CD14-positive monocyte (primary cell): ENCODE measurements at regions of chr11 and their contacts with region 1.

Region 1: DNA sequence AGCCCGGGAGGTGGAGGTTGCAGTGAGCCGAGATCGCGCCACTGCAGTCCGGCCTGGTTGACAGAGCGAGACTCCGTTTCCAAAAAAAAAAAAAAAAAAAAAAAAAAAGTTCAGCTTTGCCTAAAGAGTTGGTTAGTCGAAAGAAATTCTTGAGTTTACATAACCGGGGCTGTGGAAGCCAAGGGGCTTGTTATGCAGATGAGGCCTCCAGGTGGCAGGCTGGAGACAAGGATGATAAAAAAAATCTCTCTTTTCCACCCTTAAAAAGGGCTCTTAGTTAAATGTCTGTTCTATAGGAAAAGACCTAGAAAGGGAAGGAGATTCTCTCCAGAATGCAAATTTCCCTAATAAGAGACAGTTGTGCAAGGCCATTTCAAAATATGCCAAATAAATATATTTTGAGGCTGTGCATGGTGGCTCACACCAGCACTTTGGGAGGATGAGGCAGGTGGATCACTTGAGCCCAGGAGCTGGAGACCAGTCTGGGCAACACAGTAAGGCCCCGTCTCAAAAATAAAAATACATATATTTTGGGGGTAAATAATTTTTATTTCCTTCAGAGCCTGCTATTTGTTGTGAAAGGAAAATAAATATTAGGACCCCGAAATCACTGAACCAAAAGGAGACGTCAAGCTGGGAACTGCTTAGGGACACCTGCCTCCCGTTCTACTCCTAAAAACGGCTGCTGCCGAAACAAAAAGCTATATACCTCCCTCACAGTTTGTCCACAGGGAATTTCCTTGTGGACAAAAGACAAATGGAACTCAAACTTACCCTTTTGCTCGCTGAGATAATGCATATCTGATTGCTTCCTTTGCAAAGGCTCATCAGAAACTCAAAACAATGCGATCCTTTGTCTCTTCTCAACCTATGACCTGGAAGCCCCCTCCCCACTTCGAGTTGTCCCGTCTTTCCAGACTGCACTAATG is 2.4 kb upstream of the IFITM2 start:
- DNase-seq: peak in 2 of 3 donors; percentile 34 to 44
- H3K4me3 ChIP-seq: no peak overlapping the region
- H3K4me3 Mint-ChIP-seq: no peak overlapping the region
- H3K27ac ChIP-seq: no peak overlapping the region
- H3K27ac Mint-ChIP-seq: peak overlapping the region in 1 of 7 donors; percentile 45
- H3K4me1 ChIP-seq: peaks cover 33 to 51% of the 10 kb centered on the region in 2 donors
- H3K4me1 Mint-ChIP-seq: peaks cover 42% of the 10 kb centered on the region
- H3K27me3 ChIP-seq: peaks cover 0 to 5% of the 10 kb centered on the region in 2 donors
- H3K27me3 Mint-ChIP-seq: peaks cover 18 to 22% (median 20%) of the 10 kb centered on the region in 3 donors
- CTCF ChIP-seq: peak; percentile 73

Region 2: GRCh38 chr11:250740-251299 is 54.4 kb before region 1 on chr11:
- intact Hi-C with region 1: loop called in 1 of 2 experiments (anchors 5 kb)
- DNase-seq: peak; percentile 43 to 59 (median 57)
- H3K4me3 ChIP-seq: no peak overlapping the region
- H3K4me3 Mint-ChIP-seq: no peak overlapping the region
- H3K27ac ChIP-seq: no peak overlapping the region
- H3K27ac Mint-ChIP-seq: peak overlapping the region in 3 of 7 donors; percentile 60 to 84 (median 65)
- H3K4me1 ChIP-seq: no peaks in the 10 kb centered on the region
- H3K4me1 Mint-ChIP-seq: no peaks in the 10 kb centered on the region
- H3K27me3 ChIP-seq: no peaks in the 10 kb centered on the region
- H3K27me3 Mint-ChIP-seq: no peaks in the 10 kb centered on the region
- CTCF ChIP-seq: peak; percentile 79

Region 3: GRCh38 chr11:269146-269890 is 35.9 kb before region 1 on chr11:
- intact Hi-C with region 1: loop called in 1 of 2 experiments (anchors 5 kb)
- DNase-seq: peak; percentile 96 to 99 (median 97)
- H3K4me3 ChIP-seq: peak overlapping the region; percentile 47 to 77 (median 55)
- H3K4me3 Mint-ChIP-seq: peak overlapping the region; percentile 84 to 99
- H3K27ac ChIP-seq: peak overlapping the region; percentile 99 to 100
- H3K27ac Mint-ChIP-seq: peak overlapping the region; percentile 97 to 100 (median 99)
- H3K4me1 ChIP-seq: peaks cover 37% of the 10 kb centered on the region in 2 donors
- H3K4me1 Mint-ChIP-seq: peaks cover 35% of the 10 kb centered on the region
- H3K27me3 ChIP-seq: no peaks in the 10 kb centered on the region
- H3K27me3 Mint-ChIP-seq: peaks cover 0 to 9% (median 2%) of the 10 kb centered on the region in 3 donors
- CTCF ChIP-seq: peak; percentile 55

Region 4: GRCh38 chr11:316031-316701 is 11.0 kb after region 1 on chr11:
- intact Hi-C with region 1: loop called in 1 of 2 experiments (anchors 2 kb)
- DNase-seq: peak in 1 of 3 donors; percentile 2
- H3K4me3 ChIP-seq: no peak overlapping the region
- H3K4me3 Mint-ChIP-seq: peak overlapping the region; percentile 39 to 79
- H3K27ac ChIP-seq: no peak overlapping the region
- H3K27ac Mint-ChIP-seq: no peak overlapping the region
- H3K4me1 ChIP-seq: peaks cover 47 to 68% of the 10 kb centered on the region in 2 donors
- H3K4me1 Mint-ChIP-seq: peaks cover 49% of the 10 kb centered on the region
- H3K27me3 ChIP-seq: peaks cover 8 to 47% of the 10 kb centered on the region in 2 donors
- H3K27me3 Mint-ChIP-seq: peaks cover 24 to 65% (median 56%) of the 10 kb centered on the region in 3 donors
- CTCF ChIP-seq: no peak

Region 5: GRCh38 chr11:335779-336658 is 30.8 kb after region 1 on chr11:
- intact Hi-C with region 1: no loop called
- DNase-seq: peak in 1 of 3 donors; percentile 12
- H3K4me3 ChIP-seq: no peak overlapping the region
- H3K4me3 Mint-ChIP-seq: peak overlapping the region in 1 of 2 donors; percentile 58
- H3K27ac ChIP-seq: no peak overlapping the region
- H3K27ac Mint-ChIP-seq: peak overlapping the region in 6 of 7 donors; percentile 13 to 87 (median 52)
- H3K4me1 ChIP-seq: peaks cover 16 to 17% of the 10 kb centered on the region in 2 donors
- H3K4me1 Mint-ChIP-seq: peaks cover 24% of the 10 kb centered on the region
- H3K27me3 ChIP-seq: no peaks in the 10 kb centered on the region
- H3K27me3 Mint-ChIP-seq: peaks cover 5 to 10% (median 8%) of the 10 kb centered on the region in 3 donors
- CTCF ChIP-seq: no peak

Region 6: DNA sequence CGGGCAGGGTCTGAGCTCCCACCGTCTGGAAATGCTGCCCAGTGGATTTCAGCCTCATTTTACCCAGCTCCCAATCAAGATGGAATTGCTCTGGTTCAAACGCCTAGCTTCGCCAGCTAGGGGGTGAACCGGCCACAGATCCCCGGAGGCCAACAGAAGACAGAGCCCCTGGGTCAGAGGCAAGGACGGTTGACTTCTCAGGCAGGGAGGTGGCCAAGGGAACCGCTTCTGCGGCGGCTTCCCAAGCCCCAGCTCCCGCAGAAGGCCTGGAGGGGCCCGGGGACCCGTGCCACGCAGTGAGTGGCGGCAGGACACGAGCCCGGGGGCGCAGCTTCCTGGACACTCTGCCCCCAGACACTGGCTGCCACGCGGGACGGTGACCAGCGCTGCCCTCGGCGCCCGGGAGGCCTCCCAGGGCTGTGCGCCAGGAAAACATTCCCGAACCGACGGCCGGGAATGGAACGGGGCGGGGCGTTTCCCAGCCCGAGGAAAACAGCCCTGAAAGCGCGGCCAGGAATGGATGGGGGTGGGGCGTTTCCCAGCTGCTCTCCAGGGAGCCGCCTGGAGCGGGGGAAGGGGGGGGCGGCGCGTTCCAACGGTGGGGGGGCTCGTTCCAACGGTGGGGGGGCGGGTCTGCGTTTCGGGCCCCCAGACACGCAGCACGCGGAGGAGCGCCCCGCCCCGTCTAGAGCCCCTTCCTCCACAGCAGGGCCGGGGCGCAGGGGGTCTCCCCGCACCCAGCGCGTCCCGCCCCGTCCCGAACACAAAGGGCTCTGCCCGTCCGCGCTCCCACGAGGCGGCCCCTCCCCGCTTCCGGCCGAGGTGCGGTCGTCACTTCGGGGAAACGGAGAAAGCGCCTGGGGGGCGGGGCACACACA is 50.6 kb after region 1 on chr11:
- intact Hi-C with region 1: loop called in 1 of 2 experiments (anchors 10 kb)
- DNase-seq: peak; percentile 16 to 45 (median 37)
- H3K4me3 ChIP-seq: peak overlapping the region; percentile 18 to 66 (median 53)
- H3K4me3 Mint-ChIP-seq: peak overlapping the region; percentile 65 to 78
- H3K27ac ChIP-seq: peak overlapping the region in 1 of 2 donors; percentile 26
- H3K27ac Mint-ChIP-seq: peak overlapping the region in 3 of 7 donors; percentile 34 to 74 (median 74)
- H3K4me1 ChIP-seq: peaks cover 11 to 19% of the 10 kb centered on the region in 2 donors
- H3K4me1 Mint-ChIP-seq: peaks cover 17% of the 10 kb centered on the region
- H3K27me3 ChIP-seq: peaks cover 0 to 25% of the 10 kb centered on the region in 2 donors
- H3K27me3 Mint-ChIP-seq: peaks cover 24 to 48% (median 25%) of the 10 kb centered on the region in 3 donors
- CTCF ChIP-seq: no peak